Activated CD4-positive, alpha-beta memory T cell treated with anti-CD3 and anti-CD28 coated beads for 36 hours (primary cell): ENCODE measurements at regions of chr17 and their contacts with region 1.

Region 1: DNA sequence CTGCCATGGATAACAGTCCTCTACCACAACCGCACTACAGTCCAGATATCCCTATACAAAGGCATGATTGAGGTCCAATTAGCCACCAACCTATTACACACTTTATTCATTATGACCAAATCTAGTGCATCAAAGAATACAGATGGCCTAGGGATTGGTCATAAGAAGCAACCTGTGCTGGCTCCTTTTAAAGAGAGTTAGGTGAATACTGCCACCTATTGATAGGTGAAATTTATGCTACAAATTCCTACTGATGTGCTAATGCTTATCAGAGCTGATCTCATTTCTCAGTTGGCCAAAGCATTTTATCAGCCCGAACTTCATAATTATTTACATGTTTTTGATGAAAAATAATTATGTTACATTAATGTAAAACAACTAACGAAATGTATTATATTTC is 166.2 kb downstream of the ANKFN1 start:
- DNase-seq: no peak
- H3K4me3 Mint-ChIP-seq: no peak overlapping the region
- H3K27ac Mint-ChIP-seq: no peak overlapping the region
- H3K4me1 Mint-ChIP-seq: no peaks in the 10 kb centered on the region
- H3K27me3 Mint-ChIP-seq: peaks cover 9% of the 10 kb centered on the region

Region 2: GRCh38 chr17:56125830-56126819 is 193.4 kb before region 1 on chr17:
- CTCF ChIA-PET with region 1: no interaction called
- POLR2A ChIA-PET with region 1: no interaction called
- intact Hi-C with region 1: loop called (anchors 2 kb)
- DNase-seq: no peak
- H3K4me3 Mint-ChIP-seq: no peak overlapping the region
- H3K27ac Mint-ChIP-seq: no peak overlapping the region
- H3K4me1 Mint-ChIP-seq: no peaks in the 10 kb centered on the region
- H3K27me3 Mint-ChIP-seq: peaks cover 6% of the 10 kb centered on the region

Region 3: DNA sequence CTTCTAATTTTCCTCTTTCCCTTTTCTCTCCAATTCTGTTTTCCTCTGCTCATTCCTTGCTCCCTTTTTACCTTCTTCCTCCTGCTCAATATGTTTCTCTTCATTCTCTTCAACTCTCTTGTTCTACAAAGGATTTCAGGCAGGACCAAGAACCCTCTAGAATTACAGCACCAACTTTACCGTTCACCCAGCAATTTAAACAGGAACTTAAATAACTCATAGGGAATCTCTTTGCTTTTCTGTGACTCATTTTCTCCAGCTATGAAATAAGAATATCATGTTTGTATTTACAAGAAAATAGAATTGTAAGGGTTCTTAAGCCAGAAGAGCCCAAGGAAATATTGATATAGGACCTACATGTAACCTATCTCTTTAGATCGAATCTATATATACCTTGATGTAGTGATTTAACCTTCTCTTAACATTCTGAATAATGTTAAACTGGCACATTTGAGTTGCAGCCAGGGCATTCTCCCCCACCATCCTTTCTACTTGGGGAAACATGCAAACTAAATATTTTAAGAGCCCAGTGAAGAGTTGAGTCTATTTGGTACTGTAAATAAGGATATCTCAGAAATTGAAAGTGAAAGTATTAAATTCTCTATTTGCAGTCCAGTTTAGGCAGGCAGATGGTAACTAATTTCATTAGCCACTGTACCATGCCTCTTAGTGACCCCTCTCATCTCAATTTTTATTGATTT is 29.3 kb before region 1 on chr17:
- CTCF ChIA-PET with region 1: no interaction called
- POLR2A ChIA-PET with region 1: no interaction called
- intact Hi-C with region 1: no loop called
- DNase-seq: no peak
- H3K4me3 Mint-ChIP-seq: no peak overlapping the region
- H3K27ac Mint-ChIP-seq: no peak overlapping the region
- H3K4me1 Mint-ChIP-seq: peaks cover 18% of the 10 kb centered on the region
- H3K27me3 Mint-ChIP-seq: no peaks in the 10 kb centered on the region